K562 (cell line): ENCODE measurements at regions of chr12 and their contacts with region 1.

Region 1: DNA sequence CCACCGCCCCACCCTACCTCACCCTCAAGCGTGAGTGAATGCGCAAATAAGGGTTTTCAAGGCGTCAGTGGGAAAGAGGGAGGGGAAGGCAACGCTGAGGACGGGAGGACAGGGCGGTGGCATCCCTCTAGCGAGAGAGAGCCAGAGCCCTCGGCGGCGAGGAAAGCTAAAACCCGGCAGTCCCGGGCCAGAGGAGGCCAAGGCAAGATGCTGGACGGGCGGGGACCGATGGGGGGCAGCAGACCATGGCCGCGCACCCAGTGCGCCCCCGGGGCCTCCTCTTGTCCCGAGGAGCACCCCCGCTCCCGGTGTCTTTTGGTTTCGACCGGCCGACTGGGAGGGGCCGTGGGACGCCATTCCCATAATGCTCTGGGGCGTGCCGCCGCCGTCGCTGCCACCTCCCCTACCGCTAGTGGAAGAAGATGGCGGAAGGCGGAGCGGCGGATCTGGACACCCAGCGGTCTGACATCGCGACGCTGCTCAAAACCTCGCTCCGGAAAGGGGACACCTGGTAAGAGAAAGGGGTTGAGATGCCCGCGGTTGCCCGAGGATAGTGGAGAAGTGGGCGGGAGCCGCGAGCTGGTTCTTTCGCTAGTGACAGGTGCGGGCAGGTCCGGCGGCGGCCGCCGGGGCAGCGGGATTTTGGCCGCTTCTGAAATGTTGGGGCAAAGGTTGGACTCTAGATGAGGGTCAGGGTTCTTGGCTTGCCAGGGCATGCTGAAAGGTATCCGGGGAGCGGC is at the start of gene USP15:
- DNase-seq: peak; percentile 90 to 97 (median 92)
- ATAC-seq: peak; percentile 78
- H3K4me3 ChIP-seq: peak within 1 kb of the TSS; percentile 84
- H3K27ac ChIP-seq: peak within 1 kb of the TSS; percentile 99
- H3K4me1 ChIP-seq: peaks cover 10% of the 10 kb centered on the region in 2 experiments; a peak in 2 of 5 replicates
- H3K27me3 ChIP-seq: no peaks in the 10 kb centered on the region
- CTCF ChIP-seq: peak; percentile 77 to 91 (median 83)
- EP300 ChIP-seq: peak; percentile 51; the same call in 1 of the 2 replicates
- POLR2A ChIP-seq: peak; percentile 90
- RAD21 ChIP-seq: peak in 1 of 2 experiments; percentile 50; a peak in 2 of 4 replicates
- polyA plus RNA-seq, gene USP15: 182 to 253 TPM

Region 2: GRCh38 chr12:62210422-62210821 is 49.7 kb before region 1 on chr12:
- CTCF ChIA-PET with region 1: no interaction called
- POLR2A ChIA-PET with region 1: interaction called, 4 read pairs
- in situ Hi-C with region 1: no loop called
- intact Hi-C with region 1: loop called (anchors 5 kb)
- DNase-seq: peak; percentile 37 to 71 (median 52)
- ATAC-seq: peak; percentile 86
- H3K4me3 ChIP-seq: no peak overlapping the region
- H3K27ac ChIP-seq: no peak overlapping the region
- H3K4me1 ChIP-seq: peaks cover 0 to 3% of the 10 kb centered on the region in 2 experiments; a peak in 2 of 5 replicates
- H3K27me3 ChIP-seq: no peaks in the 10 kb centered on the region
- CTCF ChIP-seq: peak; percentile 62 to 81 (median 79)
- EP300 ChIP-seq: no peak
- POLR2A ChIP-seq: no peak
- RAD21 ChIP-seq: peak; percentile 44 to 66

Region 3: GRCh38 chr12:62308201-62308600 is 48.0 kb after region 1 on chr12:
- CTCF ChIA-PET with region 1: no interaction called
- POLR2A ChIA-PET with region 1: interaction called, 4 read pairs
- in situ Hi-C with region 1: no loop called
- intact Hi-C with region 1: loop called (anchors 5 kb)
- DNase-seq: no peak
- ATAC-seq: no peak
- H3K4me3 ChIP-seq: no peak overlapping the region
- H3K27ac ChIP-seq: no peak overlapping the region
- H3K4me1 ChIP-seq: peaks cover 3 to 16% of the 10 kb centered on the region in 2 experiments; a peak in 3 of 5 replicates
- H3K27me3 ChIP-seq: no peaks in the 10 kb centered on the region
- CTCF ChIP-seq: no peak
- EP300 ChIP-seq: no peak
- POLR2A ChIP-seq: no peak
- RAD21 ChIP-seq: no peak

Region 4: GRCh38 chr12:62320054-62320453 is 59.9 kb after region 1 on chr12:
- CTCF ChIA-PET with region 1: no interaction called
- POLR2A ChIA-PET with region 1: interaction called, 4 read pairs
- in situ Hi-C with region 1: no loop called
- intact Hi-C with region 1: loop called (anchors 5 kb)
- DNase-seq: peak in 1 of 4 experiments; percentile 72
- ATAC-seq: peak; percentile 28
- H3K4me3 ChIP-seq: no peak overlapping the region
- H3K27ac ChIP-seq: 0 out of 3 replicates have a peak overlapping the region, but pooled peaks have one; percentile 12
- H3K4me1 ChIP-seq: peaks cover 0 to 3% of the 10 kb centered on the region in 2 experiments; a peak in 1 of 5 replicates
- H3K27me3 ChIP-seq: no peaks in the 10 kb centered on the region
- CTCF ChIP-seq: no peak
- EP300 ChIP-seq: peak; percentile 22; the same call in 1 of the 2 replicates
- POLR2A ChIP-seq: 0 out of 2 replicates have a peak, but pooled peaks have one; percentile 44
- RAD21 ChIP-seq: no peak

Region 5: DNA sequence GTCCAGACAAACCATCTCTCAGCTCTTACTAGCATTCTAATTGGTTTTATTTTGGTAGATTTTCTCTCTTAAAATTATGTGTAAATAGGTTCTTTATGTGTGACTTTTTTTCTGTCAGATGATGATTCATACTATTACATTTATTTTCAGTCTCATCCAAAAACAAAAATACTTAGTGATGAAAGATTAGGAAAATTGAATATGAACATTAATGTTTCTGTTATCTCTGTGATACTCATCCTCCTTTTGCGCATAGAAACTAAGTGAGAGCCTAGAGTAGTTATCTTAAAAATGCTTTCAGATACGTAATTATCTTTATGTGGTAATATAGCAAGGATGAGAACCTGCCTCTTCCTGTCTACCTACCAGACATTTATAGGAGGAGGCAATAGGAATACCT is 122.4 kb after region 1 on chr12:
- CTCF ChIA-PET with region 1: no interaction called
- POLR2A ChIA-PET with region 1: interaction called, 3 read pairs
- in situ Hi-C with region 1: no loop called
- intact Hi-C with region 1: loop called (anchors 5 kb)
- DNase-seq: no peak
- ATAC-seq: no peak
- H3K4me3 ChIP-seq: no peak overlapping the region
- H3K27ac ChIP-seq: no peak overlapping the region
- H3K4me1 ChIP-seq: no peaks in the 10 kb centered on the region
- H3K27me3 ChIP-seq: no peaks in the 10 kb centered on the region
- CTCF ChIP-seq: no peak
- EP300 ChIP-seq: no peak
- POLR2A ChIP-seq: no peak
- RAD21 ChIP-seq: no peak

Region 6: DNA sequence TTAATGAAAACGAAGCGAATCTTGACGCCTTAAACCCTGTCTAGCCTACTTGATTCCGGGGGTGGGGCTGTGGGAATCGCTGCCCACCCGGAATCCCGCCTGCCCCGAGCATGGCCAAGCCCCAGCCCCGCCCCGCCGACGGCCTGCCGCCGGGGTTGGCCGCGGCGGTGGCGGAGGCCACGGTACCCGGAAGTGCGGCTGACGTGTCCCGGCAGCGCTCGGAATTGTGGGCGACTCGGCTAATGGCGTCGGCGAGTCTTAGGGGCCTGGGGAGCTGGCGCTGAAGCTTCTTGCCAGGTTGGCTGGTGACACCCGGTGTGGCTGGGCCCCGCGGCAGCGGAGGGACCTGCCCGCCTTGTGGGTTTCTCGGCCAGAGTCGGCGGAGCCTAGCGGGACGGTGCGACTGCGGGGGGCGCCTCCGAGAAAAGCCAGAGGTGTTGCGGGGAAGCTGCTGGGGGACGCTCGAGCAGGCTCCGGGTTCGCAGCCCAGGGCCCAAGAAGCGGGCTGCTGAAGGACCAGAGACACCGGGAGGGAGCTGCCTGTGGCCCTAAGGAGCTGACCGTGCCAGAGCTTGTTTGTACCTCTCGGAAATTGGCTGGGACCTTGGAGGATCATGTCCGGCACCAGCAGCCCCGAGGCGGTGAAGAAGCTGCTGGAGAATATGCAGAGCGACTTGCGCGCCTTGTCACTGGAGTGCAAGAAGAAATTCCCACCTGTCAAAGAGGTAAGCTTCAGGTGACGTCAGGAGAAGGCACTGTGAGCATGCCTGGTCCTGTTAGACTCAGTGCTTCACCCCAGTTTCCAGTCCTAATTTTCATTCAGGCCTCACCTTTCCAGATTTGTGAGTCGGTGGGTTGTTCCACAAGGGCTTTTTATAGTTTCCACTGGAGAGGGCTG is 206.7 kb after region 1 on chr12 and contains the start of gene MON2:
- CTCF ChIA-PET with region 1: no interaction called
- POLR2A ChIA-PET with region 1: no interaction called
- in situ Hi-C with region 1: no loop called
- intact Hi-C with region 1: loop called (anchors 2 kb)
- DNase-seq: peak; percentile 86 to 93 (median 90)
- ATAC-seq: peak; percentile 98
- H3K4me3 ChIP-seq: peak within 1 kb of the TSS; percentile 98
- H3K27ac ChIP-seq: peak within 1 kb of the TSS; percentile 91
- H3K4me1 ChIP-seq: peaks cover 3 to 14% of the 10 kb centered on the region in 2 experiments; a peak in 4 of 5 replicates
- H3K27me3 ChIP-seq: no peaks in the 10 kb centered on the region
- CTCF ChIP-seq: peak in 1 of 3 experiments; percentile 2; a peak in 1 of 6 replicates
- EP300 ChIP-seq: no peak
- POLR2A ChIP-seq: peak; percentile 91
- RAD21 ChIP-seq: no peak
- polyA plus RNA-seq, gene MON2: 3.6 to 4.3 TPM

Region 7: GRCh38 chr12:62603061-62603810 is 343.1 kb after region 1 on chr12:
- CTCF ChIA-PET with region 1: no interaction called
- POLR2A ChIA-PET with region 1: no interaction called
- in situ Hi-C with region 1: no loop called
- intact Hi-C with region 1: loop called (anchors 10 kb)
- DNase-seq: peak; percentile 77 to 91 (median 82)
- ATAC-seq: peak; percentile 94
- H3K4me3 ChIP-seq: peak overlapping the region; percentile 73
- H3K27ac ChIP-seq: peak overlapping the region; percentile 100
- H3K4me1 ChIP-seq: peaks cover 17% of the 10 kb centered on the region in 2 experiments; a peak in 4 of 5 replicates
- H3K27me3 ChIP-seq: no peaks in the 10 kb centered on the region
- CTCF ChIP-seq: peak; percentile 40 to 88 (median 66); a peak in 4 of 6 replicates
- EP300 ChIP-seq: no peak
- POLR2A ChIP-seq: peak; percentile 83
- RAD21 ChIP-seq: peak; percentile 53 to 60

Region 8: DNA sequence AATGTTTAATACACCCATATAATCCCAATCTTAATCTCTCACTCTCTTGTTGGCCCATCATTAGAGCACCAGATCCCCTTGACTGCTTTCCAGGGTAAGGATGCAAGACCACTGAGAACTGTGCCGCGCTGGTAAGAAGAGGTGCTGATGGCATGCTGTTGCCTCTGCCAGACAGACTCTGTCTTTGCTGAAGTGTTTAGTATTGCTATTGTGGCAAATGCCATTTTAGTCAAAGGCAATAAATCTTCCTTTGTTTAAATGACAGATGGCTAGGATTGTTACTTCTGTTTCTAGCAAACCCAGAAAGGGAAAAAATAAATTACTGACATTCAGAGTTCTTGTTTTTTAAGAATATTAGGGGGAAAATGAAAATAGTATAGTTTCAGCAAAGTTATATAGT is 358.8 kb after region 1 on chr12:
- CTCF ChIA-PET with region 1: no interaction called
- POLR2A ChIA-PET with region 1: no interaction called
- in situ Hi-C with region 1: no loop called
- intact Hi-C with region 1: no loop called
- DNase-seq: no peak
- ATAC-seq: no peak
- H3K4me3 ChIP-seq: no peak overlapping the region
- H3K27ac ChIP-seq: no peak overlapping the region
- H3K4me1 ChIP-seq: no peaks in the 10 kb centered on the region
- H3K27me3 ChIP-seq: no peaks in the 10 kb centered on the region
- CTCF ChIP-seq: no peak
- EP300 ChIP-seq: no peak
- POLR2A ChIP-seq: no peak
- RAD21 ChIP-seq: no peak